ENCODE measurements at regions of chr5 and their contacts with region 1.

Region 1: GRCh38 chr5:177497292-177498033 is at the start of gene PDLIM7:
- DNase-seq: peak; percentile 97
- ATAC-seq: peak; percentile 40 to 80
- H3K4me3 ChIP-seq: peak within 1 kb of the TSS; percentile 63
- H3K27ac ChIP-seq: peak within 1 kb of the TSS; percentile 82 to 95
- H3K4me1 ChIP-seq: peaks cover 51% of the 10 kb centered on the region
- CTCF ChIP-seq: no peak
- EP300 ChIP-seq: no peak
- POLR2A ChIP-seq: peak; percentile 91
- RAD21 ChIP-seq: no peak
- polyA plus RNA-seq, gene PDLIM7: 26.1 and 30.7 TPM in 2 replicates

Region 2: GRCh38 chr5:177390363-177391300 is 106.8 kb before region 1 on chr5:
- CTCF ChIA-PET with region 1: interaction called, 63 read pairs
- POLR2A ChIA-PET with region 1: no interaction called
- DNase-seq: peak; percentile 87 to 98
- ATAC-seq: peak; percentile 81 to 94
- H3K4me3 ChIP-seq: no peak overlapping the region
- H3K27ac ChIP-seq: peak overlapping the region; percentile 44 to 72; a peak in 5 of 6 replicates
- H3K4me1 ChIP-seq: peaks cover 18% of the 10 kb centered on the region
- CTCF ChIP-seq: peak; percentile 97
- EP300 ChIP-seq: no peak
- POLR2A ChIP-seq: no peak
- RAD21 ChIP-seq: peak; percentile 89 to 92

Region 3: GRCh38 chr5:177478711-177479646 is 18.5 kb before region 1 on chr5:
- CTCF ChIA-PET with region 1: interaction called, 241 read pairs
- POLR2A ChIA-PET with region 1: interaction called, 9 read pairs
- DNase-seq: no peak
- ATAC-seq: no peak; a peak in 1 of 6 replicates
- H3K4me3 ChIP-seq: no peak overlapping the region
- H3K27ac ChIP-seq: peak overlapping the region; percentile 22 to 69; a peak in 4 of 6 replicates
- H3K4me1 ChIP-seq: peaks cover 22% of the 10 kb centered on the region; the same call in 2 of the 3 replicates
- CTCF ChIP-seq: no peak
- EP300 ChIP-seq: no peak
- POLR2A ChIP-seq: no peak
- RAD21 ChIP-seq: no peak

Region 4: GRCh38 chr5:177516604-177517568 is 19.4 kb after region 1 on chr5 and contains the start of gene DDX41:
- CTCF ChIA-PET with region 1: interaction called, 40 read pairs
- POLR2A ChIA-PET with region 1: interaction called, 6 read pairs
- DNase-seq: peak; percentile 98 to 99
- ATAC-seq: peak; percentile 88 to 93
- H3K4me3 ChIP-seq: peak within 1 kb of the TSS; percentile 98
- H3K27ac ChIP-seq: peak within 1 kb of the TSS; percentile 94 to 95
- H3K4me1 ChIP-seq: peaks cover 19% of the 10 kb centered on the region
- CTCF ChIP-seq: no peak
- EP300 ChIP-seq: no peak
- POLR2A ChIP-seq: peak; percentile 79
- RAD21 ChIP-seq: peak in 1 of 2 experiments; percentile 29; a peak in 2 of 5 replicates
- polyA plus RNA-seq, gene DDX41: 87.7 and 90.7 TPM in 2 replicates

Region 5: DNA sequence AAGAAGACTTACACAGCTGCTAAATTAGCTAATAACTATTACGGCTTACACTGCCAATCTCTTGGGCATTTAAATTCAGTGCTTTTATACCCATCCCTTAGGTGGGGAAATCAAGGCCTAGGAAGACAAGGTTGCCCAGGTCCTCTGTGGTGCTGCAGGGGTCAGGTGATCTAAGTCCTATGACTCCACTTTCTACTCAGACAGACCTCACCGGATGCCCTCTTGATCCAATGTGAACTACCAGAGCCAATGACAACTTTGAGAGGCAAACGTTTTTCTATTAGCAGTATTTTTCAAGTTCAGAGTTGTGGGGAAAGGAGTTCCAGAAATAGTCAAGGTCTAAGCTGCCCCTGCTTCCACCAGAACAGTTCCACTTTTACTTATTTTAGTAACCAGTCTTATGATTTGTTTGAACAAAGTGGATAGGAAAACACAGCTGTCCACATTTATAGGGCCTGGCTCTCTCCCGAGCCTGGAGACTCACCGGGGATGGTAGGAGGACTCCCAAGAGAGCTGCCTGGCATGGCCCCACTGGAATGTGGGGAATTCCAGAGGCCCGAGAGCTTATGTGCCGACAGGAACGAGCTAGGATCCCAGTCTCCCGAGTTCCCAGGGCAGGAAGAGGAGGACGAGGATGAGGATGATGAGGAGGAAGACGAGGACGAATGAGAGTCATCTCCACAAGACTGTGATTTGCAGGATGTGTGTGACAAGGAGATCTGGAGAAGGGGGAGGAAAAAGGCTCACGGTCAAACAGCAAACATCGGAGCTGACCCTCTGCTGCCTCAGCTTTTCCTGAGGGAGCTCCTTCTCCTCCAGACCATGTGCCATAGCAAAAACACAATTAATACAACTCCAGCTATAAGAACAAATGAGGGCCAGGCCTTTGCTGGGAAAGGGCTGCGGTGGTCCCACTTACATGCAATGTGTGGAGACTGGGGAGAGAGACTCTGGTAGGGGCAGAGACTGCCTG is 40.2 kb after region 1 on chr5:
- CTCF ChIA-PET with region 1: interaction called, 24 read pairs
- POLR2A ChIA-PET with region 1: interaction called, 3 read pairs
- DNase-seq: peak; percentile 61 to 65
- ATAC-seq: peak; percentile 81 to 96
- H3K4me3 ChIP-seq: no peak overlapping the region
- H3K27ac ChIP-seq: peak overlapping the region; percentile 9 to 76; a peak in 4 of 6 replicates
- H3K4me1 ChIP-seq: peaks cover 26% of the 10 kb centered on the region
- CTCF ChIP-seq: no peak
- EP300 ChIP-seq: no peak
- POLR2A ChIP-seq: no peak
- RAD21 ChIP-seq: no peak

Region 6: DNA sequence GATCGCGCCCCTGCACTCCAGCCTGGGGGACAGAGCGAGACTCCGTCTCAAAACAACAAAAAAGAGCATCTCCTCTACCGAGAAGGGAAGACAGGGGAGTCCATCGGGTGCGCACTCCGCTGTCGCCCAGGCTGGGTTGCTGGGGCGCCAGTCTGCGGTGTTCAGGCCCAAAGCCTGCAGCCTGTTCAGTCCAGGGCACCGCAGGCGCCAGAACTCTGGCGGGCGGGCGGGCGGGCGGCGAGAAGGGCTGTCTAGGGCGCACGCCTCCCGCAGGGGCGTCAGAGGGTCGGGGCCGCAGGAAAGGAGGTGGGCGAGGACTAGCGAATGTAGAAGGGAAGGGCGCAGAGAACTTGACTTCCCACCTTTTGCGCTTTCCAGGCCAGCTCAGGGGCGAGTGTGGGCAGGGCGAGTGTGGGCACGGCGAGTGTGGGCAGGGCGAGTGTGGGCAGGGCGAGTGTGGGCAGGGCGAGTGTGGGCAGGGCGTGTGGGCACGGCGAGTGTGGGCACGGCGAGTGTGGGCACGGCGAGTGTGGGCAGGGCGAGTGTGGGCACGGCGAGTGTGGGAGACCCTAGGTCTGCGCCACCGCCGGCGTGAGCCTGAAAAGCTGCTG is 488.1 kb after region 1 on chr5:
- CTCF ChIA-PET with region 1: no interaction called
- POLR2A ChIA-PET with region 1: no interaction called
- DNase-seq: no peak
- ATAC-seq: no peak
- H3K4me3 ChIP-seq: no peak overlapping the region
- H3K27ac ChIP-seq: no peak overlapping the region
- H3K4me1 ChIP-seq: no peaks in the 10 kb centered on the region
- CTCF ChIP-seq: no peak
- EP300 ChIP-seq: no peak
- POLR2A ChIP-seq: no peak
- RAD21 ChIP-seq: no peak

Region 7: GRCh38 chr5:178069909-178070308 is 572.4 kb after region 1 on chr5:
- CTCF ChIA-PET with region 1: no interaction called
- POLR2A ChIA-PET with region 1: no interaction called
- DNase-seq: peak; percentile 36 to 52
- ATAC-seq: peak; percentile 81 to 86
- H3K4me3 ChIP-seq: no peak overlapping the region
- H3K27ac ChIP-seq: no peak overlapping the region
- H3K4me1 ChIP-seq: no peaks in the 10 kb centered on the region
- CTCF ChIP-seq: peak; percentile 18; the same call in 1 of the 3 replicates
- EP300 ChIP-seq: no peak
- POLR2A ChIP-seq: no peak
- RAD21 ChIP-seq: peak; percentile 23 to 58; a peak in 3 of 5 replicates

Measured in A549 (cell line).